ENCODE measurements at regions of chr1 and their contacts with region 1.

Region 1: DNA sequence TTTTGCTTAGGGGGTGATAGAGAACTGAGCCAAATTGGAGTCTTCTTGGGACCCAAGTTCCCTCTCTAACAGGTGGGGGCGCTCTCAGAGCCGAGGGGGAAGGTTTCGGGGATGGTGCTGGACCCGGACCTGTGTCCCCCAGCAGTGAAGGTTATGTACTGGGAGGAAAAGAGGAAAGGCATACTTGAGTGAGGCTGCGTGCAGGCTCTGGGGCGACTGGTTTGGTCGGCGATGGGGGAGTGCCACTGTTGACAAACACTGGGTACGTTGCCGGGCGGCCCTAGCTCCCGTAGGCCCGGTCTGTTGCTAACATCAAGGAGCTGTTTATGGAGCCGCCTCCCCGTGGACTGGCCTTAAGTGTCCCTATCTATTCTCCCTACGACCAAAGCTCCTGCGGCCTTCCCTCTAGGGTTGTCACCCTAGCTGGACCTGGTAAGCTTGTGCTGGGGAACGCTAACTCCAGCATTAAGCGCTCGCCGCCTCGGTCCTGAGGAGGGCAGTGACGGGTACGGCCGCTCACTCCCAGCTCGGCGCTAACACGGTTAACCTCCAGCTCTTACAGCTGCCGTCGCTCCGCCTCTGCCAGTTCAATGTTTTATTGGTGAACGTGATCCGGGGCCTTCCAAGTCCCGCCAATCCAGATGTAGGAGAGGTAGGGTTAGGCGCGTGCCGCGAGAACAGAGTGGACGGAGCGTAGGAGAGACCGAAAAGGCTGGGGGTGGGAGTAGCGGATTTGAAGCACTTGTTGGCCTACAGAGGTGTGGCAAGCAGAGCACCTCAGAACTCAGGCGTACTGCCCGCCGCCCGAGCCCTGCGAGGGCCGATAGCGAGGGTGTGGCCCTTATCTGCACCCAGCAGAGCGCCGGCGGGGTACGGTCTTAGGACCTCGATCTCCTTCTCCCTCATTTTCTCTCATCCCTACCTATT is at the start of gene PPOX:
- DNase-seq: peak; percentile 95 to 96
- H3K4me3 ChIP-seq: peak within 1 kb of the TSS; percentile 72
- H3K27ac ChIP-seq: peak within 1 kb of the TSS; percentile 45
- H3K4me1 ChIP-seq: peaks cover 15% of the 10 kb centered on the region
- H3K27me3 ChIP-seq: no peaks in the 10 kb centered on the region
- CTCF ChIP-seq: no peak; the same call in 1 of the 2 replicates
- total RNA-seq, gene PPOX: 23.1 and 26.4 TPM in 2 replicates

Region 2: DNA sequence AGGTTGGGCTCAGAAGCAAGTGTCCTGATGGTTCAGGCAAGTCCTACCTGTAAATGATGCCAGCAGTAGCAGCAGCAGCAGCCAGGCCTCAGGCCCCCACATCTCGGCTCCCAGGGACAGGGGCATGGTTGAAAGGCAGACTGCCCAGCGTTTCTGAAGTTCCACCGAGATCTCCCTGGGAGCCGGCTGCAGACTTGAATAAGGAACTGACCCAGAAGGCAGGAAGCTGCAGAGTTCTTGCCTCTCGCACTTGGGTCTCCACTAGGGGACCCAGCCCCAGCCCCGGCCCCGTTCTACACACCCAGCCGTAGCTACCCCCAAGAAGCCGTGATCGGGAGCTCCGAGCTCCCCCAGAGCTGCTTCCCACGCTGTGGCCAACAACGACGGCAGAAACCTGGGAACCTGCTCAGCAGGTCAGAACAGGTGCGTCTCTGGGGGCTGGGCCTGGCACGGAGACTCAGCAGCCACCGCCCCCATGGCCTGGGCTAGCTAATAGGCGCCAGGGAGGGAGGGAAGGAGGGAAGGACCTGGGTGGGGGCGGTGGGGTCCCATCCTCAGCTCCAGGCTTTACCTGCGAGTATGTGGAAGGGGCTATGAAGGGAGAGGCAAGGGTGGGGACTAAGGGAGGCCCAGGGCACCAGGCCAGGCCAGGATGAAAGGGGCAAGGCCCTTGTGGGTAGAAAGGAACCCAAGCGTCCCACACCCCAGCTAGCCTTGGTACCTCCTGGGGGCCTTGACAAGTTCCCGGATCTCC is 76.7 kb before region 1 on chr1 and contains the start of gene NECTIN4:
- CTCF ChIA-PET with region 1: no interaction called
- POLR2A ChIA-PET with region 1: no interaction called
- intact Hi-C with region 1: no loop called
- DNase-seq: peak; percentile 78 to 81
- H3K4me3 ChIP-seq: peak within 1 kb of the TSS; percentile 61
- H3K27ac ChIP-seq: peak within 1 kb of the TSS; percentile 86
- H3K4me1 ChIP-seq: peaks cover 90% of the 10 kb centered on the region
- H3K27me3 ChIP-seq: no peaks in the 10 kb centered on the region
- CTCF ChIP-seq: no peak
- total RNA-seq, gene NECTIN4: 8.8 and 9.0 TPM in 2 replicates

Region 3: DNA sequence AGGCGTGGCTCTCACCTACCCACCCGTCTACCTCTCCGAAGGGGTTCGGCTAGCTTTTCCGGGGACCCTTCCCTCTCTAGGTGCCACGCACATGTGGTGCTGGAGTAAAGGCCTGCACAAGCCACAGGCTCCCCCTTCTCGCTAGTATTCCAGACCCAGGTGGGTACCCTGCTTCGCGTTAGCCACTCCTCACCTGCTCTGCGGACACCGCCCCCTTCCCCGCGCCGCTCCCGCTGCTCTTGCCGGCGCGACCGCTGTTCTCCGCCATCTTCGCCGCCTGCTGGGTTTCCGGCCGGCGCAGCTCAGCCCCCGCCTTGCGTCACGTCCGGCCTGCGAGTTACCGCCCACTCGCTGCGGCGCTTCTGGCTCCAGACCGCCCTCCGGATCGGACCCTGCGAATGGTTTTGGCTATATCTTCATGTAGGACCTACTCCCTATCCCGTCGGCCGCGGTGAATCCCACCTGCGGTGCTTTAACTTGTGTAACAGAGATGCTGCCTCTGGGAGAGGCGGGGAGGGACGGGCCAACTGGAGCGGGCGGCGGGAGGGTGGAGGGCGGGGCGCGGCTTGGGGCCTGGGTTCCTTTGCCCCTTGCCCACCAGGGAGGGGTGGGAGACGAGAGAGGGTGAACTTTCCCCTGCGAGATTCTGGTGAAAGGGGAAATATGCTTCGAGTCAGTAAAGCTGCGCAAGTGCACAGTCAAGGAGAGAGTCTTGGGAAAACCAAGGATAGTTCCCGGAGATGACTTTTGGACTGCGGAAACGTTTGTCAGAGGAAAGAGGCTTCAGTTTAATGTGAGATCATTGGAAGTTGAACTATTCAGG is 48.0 kb before region 1 on chr1 and contains the starts of genes NIT1 and PFDN2:
- CTCF ChIA-PET with region 1: no interaction called
- POLR2A ChIA-PET with region 1: no interaction called
- intact Hi-C with region 1: loop called (anchors 2 kb)
- DNase-seq: peak; percentile 70 to 80
- H3K4me3 ChIP-seq: peak within 1 kb of the TSS; percentile 82
- H3K27ac ChIP-seq: peak within 1 kb of the TSS; percentile 81
- H3K4me1 ChIP-seq: peaks cover 50% of the 10 kb centered on the region
- H3K27me3 ChIP-seq: no peaks in the 10 kb centered on the region
- CTCF ChIP-seq: no peak
- total RNA-seq, gene NIT1: 25.9 and 26.8 TPM in 2 replicates
- total RNA-seq, gene PFDN2: 68.2 and 74.4 TPM in 2 replicates

Region 4: GRCh38 chr1:161153679-161154426 is 12.2 kb before region 1 on chr1 and contains the start of gene UFC1:
- CTCF ChIA-PET with region 1: no interaction called
- POLR2A ChIA-PET with region 1: interaction called, 15 read pairs
- intact Hi-C with region 1: no loop called
- DNase-seq: peak; percentile 74 to 88
- H3K4me3 ChIP-seq: peak within 1 kb of the TSS; percentile 86
- H3K27ac ChIP-seq: peak within 1 kb of the TSS; percentile 99
- H3K4me1 ChIP-seq: peaks cover 11% of the 10 kb centered on the region; the same call in 1 of the 2 replicates
- H3K27me3 ChIP-seq: no peaks in the 10 kb centered on the region
- CTCF ChIP-seq: no peak
- total RNA-seq, gene UFC1: 74.2 and 74.9 TPM in 2 replicates